GM18951 (cell line): ENCODE measurements at regions of chr14 and their contacts with region 1.

Region 1: DNA sequence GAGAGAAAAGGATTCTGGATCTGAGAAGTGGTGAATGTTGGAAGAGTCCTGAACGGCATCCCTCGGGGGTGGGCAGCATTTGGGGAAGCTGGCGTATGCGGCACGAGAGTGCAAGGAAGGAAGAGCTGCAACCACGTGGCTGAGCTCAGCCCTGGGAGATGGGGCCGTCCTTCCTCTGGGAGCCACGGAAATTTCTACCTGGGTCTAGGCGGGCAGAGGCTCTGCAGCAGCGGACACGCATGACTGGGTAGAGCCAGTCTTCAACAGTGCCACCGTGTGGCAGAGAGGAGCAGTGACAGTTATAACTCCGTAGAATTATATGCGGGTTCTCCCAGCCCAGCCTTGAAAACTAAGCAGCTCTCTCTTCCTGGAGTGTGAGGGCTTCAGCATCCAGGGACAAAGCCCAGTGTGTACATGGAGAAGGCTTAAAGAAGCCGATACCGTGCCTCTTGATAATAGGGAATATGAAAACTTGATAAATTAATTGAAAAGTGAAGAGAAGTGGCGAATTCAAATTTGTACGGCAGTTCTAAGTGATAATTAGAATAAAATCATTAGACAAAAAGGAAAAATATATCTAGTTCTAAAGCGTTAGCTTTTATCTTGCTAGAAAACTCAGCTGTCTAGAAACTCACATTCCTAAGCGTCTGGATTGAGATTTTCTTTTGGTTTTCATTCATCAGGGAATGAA is 82.9 kb upstream of the STXBP6 start:
- POLR2A ChIP-seq: no peak

Region 2: DNA sequence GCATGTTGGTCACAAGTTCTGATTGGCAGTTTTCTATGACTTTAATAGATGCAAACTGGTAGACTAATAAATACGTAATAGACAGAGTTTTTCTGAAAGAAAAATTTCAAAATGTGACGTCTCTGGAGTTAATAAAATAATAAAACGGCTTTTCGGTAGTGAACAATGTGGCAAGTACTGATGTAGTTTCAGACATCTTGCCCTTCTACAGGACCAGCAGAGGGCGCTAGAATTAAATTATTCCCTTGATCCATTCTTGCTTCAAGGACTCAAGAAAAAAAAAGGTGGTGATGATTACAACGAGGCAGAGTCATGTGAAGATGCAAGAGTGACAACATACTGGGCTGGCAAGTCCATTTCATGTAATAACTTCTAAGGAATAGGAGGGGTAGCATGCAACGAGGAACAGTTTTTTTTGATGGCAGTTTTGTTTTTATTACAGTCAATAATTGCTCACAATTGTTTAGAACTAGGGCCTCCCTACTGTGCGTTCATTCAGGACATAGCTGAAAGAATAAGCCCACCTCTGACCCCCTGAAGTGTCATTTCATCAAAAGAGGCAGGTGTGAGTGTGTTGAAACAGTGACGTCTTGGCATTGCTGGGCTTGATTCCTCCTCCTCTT is 397.9 kb before region 1 on chr14:
- in situ Hi-C with region 1: loop called (anchors 25 kb)
- POLR2A ChIP-seq: no peak

Region 3: GRCh38 chr14:24806061-24806678 is 326.7 kb before region 1 on chr14:
- in situ Hi-C with region 1: loop called (anchors 25 kb)
- POLR2A ChIP-seq: no peak

Region 4: DNA sequence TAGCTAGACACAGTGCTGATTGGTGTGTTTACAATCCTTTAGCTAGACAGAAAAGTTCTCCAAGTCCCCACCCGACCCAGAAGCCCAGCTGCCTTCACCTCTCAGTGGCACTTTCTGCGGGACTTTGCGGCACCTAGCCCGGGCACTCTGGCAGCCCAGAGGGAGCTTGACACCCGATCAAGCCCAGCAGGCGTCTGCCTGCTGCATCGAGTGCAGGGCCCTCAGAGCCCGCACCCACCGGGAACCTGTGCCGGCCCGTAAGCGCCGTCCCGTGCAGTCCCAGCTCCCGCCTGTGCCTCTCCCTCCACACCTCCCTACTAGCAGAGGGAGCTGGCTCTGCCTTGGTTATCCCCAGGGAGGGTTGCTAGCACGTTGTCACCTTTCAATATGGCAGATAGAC is 548.1 kb after region 1 on chr14:
- in situ Hi-C with region 1: no loop called
- POLR2A ChIP-seq: no peak